ENCODE measurements at regions of chr1 and their contacts with region 1.

Region 1: GRCh38 chr1:208238710-208239472 is 5.3 kb downstream of the PLXNA2 start:
- DNase-seq: peak; percentile 80
- H3K4me3 ChIP-seq: no peak overlapping the region
- H3K27ac ChIP-seq: peak overlapping the region; percentile 58
- H3K4me1 ChIP-seq: peaks cover 53% of the 10 kb centered on the region
- H3K27me3 ChIP-seq: no peaks in the 10 kb centered on the region
- CTCF ChIP-seq: peak; percentile 76 to 83

Region 2: DNA sequence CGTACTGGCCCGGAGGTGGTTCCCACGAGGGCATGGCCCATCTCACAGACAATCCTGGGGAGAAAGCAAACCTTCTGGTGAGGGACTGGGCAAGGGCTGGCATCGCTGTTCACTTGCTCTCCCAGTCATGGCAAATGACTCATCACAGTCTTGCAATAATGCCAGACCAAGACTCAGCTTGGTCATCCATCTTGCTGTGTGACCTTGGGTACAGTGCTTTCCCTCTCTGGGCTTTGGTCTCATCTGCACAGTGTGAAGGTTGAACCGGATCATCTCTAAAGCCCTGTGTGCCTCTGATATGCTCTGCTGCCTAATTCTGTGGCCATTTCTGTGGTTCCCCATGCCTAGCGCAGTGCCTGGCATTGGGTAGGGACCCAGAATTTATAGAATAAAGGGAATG is 184.4 kb before region 1 on chr1:
- CTCF ChIA-PET with region 1: no interaction called
- dilution Hi-C with region 1: no loop called
- in situ Hi-C with region 1: no loop called
- intact Hi-C with region 1: no loop called
- DNase-seq: no peak
- H3K4me3 ChIP-seq: no peak overlapping the region
- H3K27ac ChIP-seq: no peak overlapping the region
- H3K4me1 ChIP-seq: peaks cover 2% of the 10 kb centered on the region
- H3K27me3 ChIP-seq: no peaks in the 10 kb centered on the region
- CTCF ChIP-seq: no peak

Region 3: DNA sequence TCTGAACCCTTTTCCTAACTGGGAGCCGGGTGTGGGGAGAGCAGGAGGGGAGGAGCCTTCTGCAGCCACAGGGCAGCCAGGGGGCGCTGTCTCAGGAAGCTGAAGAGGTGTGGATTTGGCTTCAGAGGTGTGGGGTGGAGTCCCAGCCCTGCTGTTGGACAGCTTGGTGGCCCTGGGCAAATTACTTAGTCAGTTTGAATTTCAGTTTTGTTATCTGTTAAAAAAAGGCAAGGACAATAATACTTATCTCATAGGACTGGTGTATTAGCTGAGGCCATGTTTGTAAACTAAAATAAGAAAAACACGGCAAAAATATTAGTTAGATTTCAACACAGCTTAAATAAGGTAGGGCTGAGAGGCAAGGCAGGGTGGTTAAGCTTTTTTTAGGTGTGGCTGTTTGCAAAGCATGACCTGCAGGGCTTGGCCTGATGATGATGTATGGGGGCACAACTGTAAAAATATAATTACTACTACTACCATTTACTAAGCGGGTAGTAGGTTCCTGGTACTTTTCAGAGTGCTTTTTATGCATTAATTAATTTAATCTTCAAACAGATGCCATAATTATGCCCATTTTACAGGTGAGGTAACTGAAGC is 106.5 kb before region 1 on chr1:
- CTCF ChIA-PET with region 1: interaction called, 40 read pairs
- dilution Hi-C with region 1: no loop called
- in situ Hi-C with region 1: loop called (anchors 10 kb)
- intact Hi-C with region 1: loop called (anchors 1 kb)
- DNase-seq: peak; percentile 77
- H3K4me3 ChIP-seq: no peak overlapping the region
- H3K27ac ChIP-seq: peak overlapping the region; percentile 35
- H3K4me1 ChIP-seq: peaks cover 7% of the 10 kb centered on the region
- H3K27me3 ChIP-seq: no peaks in the 10 kb centered on the region
- CTCF ChIP-seq: peak; percentile 92 to 93

Region 4: DNA sequence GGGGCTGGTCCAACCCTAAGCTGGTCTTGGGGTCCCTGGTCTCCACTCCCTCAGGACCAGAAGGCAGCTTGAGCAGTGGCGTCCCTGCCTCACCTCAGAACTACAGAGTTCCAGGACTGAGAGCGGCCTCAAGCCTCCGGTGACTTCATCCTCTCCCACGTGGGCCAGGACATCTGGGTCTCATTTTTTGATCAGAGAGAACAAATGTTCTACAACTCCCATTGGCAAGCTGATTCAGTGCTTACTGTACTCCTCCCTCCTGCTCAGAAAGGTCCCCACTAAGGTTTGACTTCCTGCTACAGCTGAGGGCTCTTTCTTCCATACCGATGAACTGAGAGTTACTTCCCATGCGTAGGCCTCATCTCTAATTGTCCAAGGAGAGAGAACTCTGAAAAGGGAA is 73.2 kb before region 1 on chr1:
- CTCF ChIA-PET with region 1: no interaction called
- dilution Hi-C with region 1: no loop called
- in situ Hi-C with region 1: no loop called
- intact Hi-C with region 1: loop called (anchors 5 kb)
- DNase-seq: peak; percentile 11
- H3K4me3 ChIP-seq: no peak overlapping the region
- H3K27ac ChIP-seq: peak overlapping the region; percentile 64
- H3K4me1 ChIP-seq: peaks cover 23% of the 10 kb centered on the region
- H3K27me3 ChIP-seq: no peaks in the 10 kb centered on the region
- CTCF ChIP-seq: no peak

Region 5: DNA sequence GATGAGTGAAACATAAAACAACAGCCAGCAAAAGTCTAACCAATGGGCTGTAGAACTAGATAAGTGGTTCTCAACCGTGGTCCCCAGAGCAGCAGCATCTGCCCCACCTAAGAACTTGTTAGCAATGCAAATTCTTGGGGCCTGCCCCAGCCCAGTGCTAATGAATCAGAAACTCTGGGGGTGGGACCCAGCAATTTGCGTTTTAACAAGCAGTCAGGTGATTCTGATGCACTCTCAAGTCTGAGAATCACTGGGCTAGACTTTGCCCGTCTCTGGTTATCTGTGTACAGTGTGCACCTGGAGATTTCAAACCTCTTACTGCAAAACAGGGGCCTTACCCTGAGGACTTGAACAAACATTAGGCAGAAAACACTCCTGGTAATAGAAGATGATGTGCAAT is 61.2 kb before region 1 on chr1:
- CTCF ChIA-PET with region 1: interaction called, 24 read pairs
- dilution Hi-C with region 1: no loop called
- in situ Hi-C with region 1: no loop called
- intact Hi-C with region 1: no loop called
- DNase-seq: peak; percentile 36
- H3K4me3 ChIP-seq: no peak overlapping the region
- H3K27ac ChIP-seq: no peak overlapping the region
- H3K4me1 ChIP-seq: peaks cover 17% of the 10 kb centered on the region
- H3K27me3 ChIP-seq: no peaks in the 10 kb centered on the region
- CTCF ChIP-seq: no peak

Region 6: GRCh38 chr1:208184088-208184911 is 54.6 kb before region 1 on chr1:
- CTCF ChIA-PET with region 1: interaction called, 7 read pairs
- dilution Hi-C with region 1: no loop called
- in situ Hi-C with region 1: no loop called
- intact Hi-C with region 1: loop called (anchors 1 kb)
- DNase-seq: peak; percentile 99
- H3K4me3 ChIP-seq: no peak overlapping the region
- H3K27ac ChIP-seq: peak overlapping the region; percentile 57
- H3K4me1 ChIP-seq: peaks cover 37% of the 10 kb centered on the region
- H3K27me3 ChIP-seq: no peaks in the 10 kb centered on the region
- CTCF ChIP-seq: no peak

Region 7: GRCh38 chr1:208194944-208195343 is 43.9 kb before region 1 on chr1:
- CTCF ChIA-PET with region 1: no interaction called
- dilution Hi-C with region 1: no loop called
- in situ Hi-C with region 1: no loop called
- intact Hi-C with region 1: no loop called
- DNase-seq: no peak
- H3K4me3 ChIP-seq: no peak overlapping the region
- H3K27ac ChIP-seq: no peak overlapping the region
- H3K4me1 ChIP-seq: no peaks in the 10 kb centered on the region
- H3K27me3 ChIP-seq: no peaks in the 10 kb centered on the region
- CTCF ChIP-seq: no peak

Region 8: GRCh38 chr1:208207388-208208131 is 31.3 kb before region 1 on chr1:
- CTCF ChIA-PET with region 1: interaction called, 75 read pairs
- dilution Hi-C with region 1: no loop called
- in situ Hi-C with region 1: no loop called
- intact Hi-C with region 1: loop called (anchors 1 kb)
- DNase-seq: peak; percentile 99
- H3K4me3 ChIP-seq: no peak overlapping the region
- H3K27ac ChIP-seq: peak overlapping the region; percentile 66
- H3K4me1 ChIP-seq: peaks cover 69% of the 10 kb centered on the region
- H3K27me3 ChIP-seq: no peaks in the 10 kb centered on the region
- CTCF ChIP-seq: no peak

Region 9: GRCh38 chr1:208219659-208220282 is 19.1 kb before region 1 on chr1:
- CTCF ChIA-PET with region 1: no interaction called
- dilution Hi-C with region 1: no loop called
- in situ Hi-C with region 1: no loop called
- intact Hi-C with region 1: loop called (anchors 1 kb)
- DNase-seq: peak; percentile 92
- H3K4me3 ChIP-seq: peak overlapping the region in 1 of 3 experiments; percentile 14
- H3K27ac ChIP-seq: peak overlapping the region; percentile 82
- H3K4me1 ChIP-seq: peaks cover 66% of the 10 kb centered on the region
- H3K27me3 ChIP-seq: no peaks in the 10 kb centered on the region
- CTCF ChIP-seq: no peak

Measured in mammary epithelial cell (primary cell).